AG04449 (cell line): ENCODE measurements at regions of chr12 and their contacts with region 1.

Region 1: DNA sequence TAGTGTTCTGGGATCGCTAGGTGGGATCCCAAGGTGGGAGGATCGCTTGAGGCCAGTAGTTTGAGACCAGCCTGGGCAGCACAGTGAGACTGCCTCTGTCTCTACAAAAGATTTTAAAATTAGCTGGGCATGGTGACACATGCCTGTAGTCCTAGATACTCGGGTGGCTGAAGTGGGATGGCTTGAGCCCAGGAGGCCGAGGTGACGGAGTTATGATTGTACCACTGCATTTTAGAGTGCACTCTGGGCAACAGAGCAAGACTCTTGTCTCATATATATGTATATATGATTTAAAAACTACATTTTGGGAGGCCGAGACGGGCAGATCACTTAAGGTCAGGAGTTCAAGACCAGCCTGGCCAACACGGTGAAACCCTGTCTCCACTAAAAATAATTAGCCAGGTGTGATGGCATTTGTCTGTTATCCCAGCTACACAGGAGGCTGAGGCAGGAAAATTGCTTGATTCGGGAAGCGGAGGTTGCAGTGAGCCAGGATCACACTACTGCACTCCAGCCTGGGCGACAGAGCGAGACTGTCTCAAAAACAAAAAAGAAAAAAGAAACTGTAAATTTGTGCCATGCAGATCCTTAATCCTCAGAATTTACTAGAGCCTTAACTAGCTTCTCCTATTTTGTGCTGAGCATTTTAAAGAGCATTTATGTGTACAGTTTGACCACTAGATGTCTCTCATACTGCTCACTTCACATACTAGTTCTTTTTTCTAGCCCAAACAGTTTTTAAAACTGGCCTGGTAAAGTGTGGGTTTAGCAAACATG is 114.8 kb downstream of the MON2 start:
- DNase-seq: no peak
- H3K4me3 ChIP-seq: no peak overlapping the region
- CTCF ChIP-seq: peak; percentile 51

Region 2: GRCh38 chr12:62562846-62563245 is 18.6 kb before region 1 on chr12:
- CTCF ChIA-PET with region 1: interaction called, 11 read pairs
- POLR2A ChIA-PET with region 1: no interaction called
- DNase-seq: peak; percentile 36
- H3K4me3 ChIP-seq: no peak overlapping the region
- CTCF ChIP-seq: no peak

Region 3: DNA sequence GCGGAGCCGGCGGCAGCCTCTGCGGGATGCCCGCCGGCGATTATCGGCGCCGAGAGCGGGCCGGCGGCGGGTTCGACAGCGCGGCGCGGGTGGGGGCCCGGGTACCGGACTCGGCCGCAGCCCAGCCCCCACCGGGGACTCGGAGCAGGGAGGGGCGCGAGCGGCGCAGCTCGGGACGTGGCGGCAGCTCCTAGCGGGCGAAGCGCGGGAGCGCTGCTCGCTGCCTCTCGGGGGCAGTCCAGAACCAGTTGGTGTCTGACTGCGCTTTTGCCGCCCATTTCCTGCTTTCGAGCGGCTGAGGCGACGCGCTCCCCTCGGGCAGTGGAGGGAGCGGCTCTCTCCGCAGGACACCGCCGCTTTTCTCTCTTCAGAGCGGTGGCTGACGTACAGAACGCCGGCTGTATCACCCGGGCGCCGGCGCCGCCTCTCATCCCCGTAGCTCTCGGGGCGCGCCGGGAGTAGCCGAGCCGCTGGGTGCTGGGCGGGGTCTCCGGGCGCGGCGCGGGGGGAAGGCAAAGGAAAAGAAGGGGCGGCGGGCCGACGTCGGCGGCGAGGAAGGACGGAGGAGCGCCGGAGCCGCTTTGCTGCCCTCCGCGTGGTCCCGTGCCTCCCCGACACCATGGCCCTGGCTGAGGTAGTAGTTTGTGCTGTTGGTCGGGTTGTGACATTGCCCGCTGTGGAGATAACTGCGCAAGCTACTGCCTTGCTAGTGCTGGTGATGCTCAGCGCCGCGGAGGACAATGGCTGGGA is 21.8 kb after region 1 on chr12:
- CTCF ChIA-PET with region 1: interaction called, 11 read pairs
- POLR2A ChIA-PET with region 1: interaction called, 4 read pairs
- DNase-seq: no peak
- H3K4me3 ChIP-seq: peak overlapping the region; percentile 90
- CTCF ChIP-seq: peak; percentile 73

Region 4: GRCh38 chr12:62785941-62786559 is 204.6 kb after region 1 on chr12:
- CTCF ChIA-PET with region 1: interaction called, 26 read pairs
- POLR2A ChIA-PET with region 1: no interaction called
- DNase-seq: peak; percentile 73
- H3K4me3 ChIP-seq: no peak overlapping the region
- CTCF ChIP-seq: no peak

Region 5: DNA sequence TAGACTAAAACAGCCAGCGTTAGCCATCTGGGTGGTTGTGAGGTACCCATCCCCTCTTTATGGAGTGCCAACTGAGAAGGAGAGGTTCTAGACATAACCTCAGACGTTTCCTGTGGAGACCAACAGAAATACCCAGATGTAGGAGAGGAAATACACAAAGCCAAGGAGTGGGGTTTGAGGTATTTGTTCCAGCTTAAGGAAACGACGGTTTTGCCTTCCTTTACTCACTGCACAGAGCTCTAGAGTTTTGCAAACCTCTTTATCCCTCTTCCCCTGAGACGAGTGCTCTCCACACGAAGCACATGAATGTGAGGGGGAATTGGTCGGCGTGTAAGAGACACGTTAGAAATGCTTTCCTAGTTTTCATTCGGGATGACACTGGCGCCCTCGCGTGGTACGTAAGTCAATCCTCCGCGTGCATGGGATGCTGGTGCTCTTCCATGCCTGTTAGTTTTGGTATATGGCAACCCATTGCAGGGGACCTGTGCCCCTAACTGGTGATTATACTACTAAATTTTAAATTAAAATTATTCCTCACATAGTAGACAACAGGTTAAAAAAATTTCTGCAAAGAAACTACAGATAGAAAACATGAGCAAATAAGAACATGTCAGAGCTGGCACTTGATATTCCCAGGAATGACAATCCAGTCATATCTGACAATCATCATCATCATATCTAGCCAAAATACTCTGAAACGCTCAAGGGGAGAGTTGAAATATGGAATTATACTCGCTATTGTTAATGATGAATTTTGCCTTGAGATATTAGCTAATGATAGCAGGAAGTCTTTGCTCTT is 231.8 kb after region 1 on chr12:
- CTCF ChIA-PET with region 1: interaction called, 20 read pairs
- POLR2A ChIA-PET with region 1: no interaction called
- DNase-seq: no peak
- H3K4me3 ChIP-seq: peak overlapping the region; percentile 21; the same call in 1 of the 2 replicates
- CTCF ChIP-seq: peak; percentile 76